ENCODE measurements at regions of chr7 and their contacts with region 1.

Region 1: GRCh38 chr7:107890962-107891635 is at the start of gene DLD:
- DNase-seq: peak; percentile 95 to 98 (median 96)
- H3K4me3 ChIP-seq: peak within 1 kb of the TSS; percentile 12 to 87 (median 69)
- H3K27ac ChIP-seq: peak within 1 kb of the TSS; percentile 36 to 100 (median 99)
- H3K4me1 ChIP-seq: peaks cover 7 to 42% of the 10 kb centered on the region in 2 donors
- H3K27me3 ChIP-seq: no peaks in the 10 kb centered on the region
- CTCF ChIP-seq: no peak
- POLR2A ChIP-seq: peak; percentile 85 to 87
- total RNA-seq, gene DLD: 72.4 to 616 (median 153) TPM

Region 2: DNA sequence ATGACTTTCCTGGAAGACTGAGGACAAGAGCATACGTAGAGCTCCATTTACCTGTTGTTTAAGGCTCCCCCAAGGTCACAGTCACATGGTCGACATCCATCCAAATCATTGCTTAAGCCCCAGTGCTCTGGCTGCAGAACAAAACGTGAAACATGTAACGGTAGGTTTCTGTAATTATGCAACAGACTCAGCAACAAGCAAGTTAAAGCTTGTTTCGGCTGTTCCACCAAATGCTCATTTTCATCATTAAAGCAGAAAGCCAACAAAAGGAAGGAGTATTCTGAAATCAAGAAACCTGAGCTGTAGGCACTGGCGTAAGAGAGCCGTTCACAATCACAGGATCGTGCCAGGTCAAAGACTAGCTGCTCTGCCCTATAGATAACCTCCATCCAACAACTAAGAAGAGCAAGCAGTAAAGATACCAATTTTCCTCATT is 81.9 kb after region 1 on chr7:
- intact Hi-C with region 1: no loop called
- DNase-seq: no peak
- H3K4me3 ChIP-seq: no peak overlapping the region
- H3K27ac ChIP-seq: peak overlapping the region in 4 of 5 donors; percentile 9 to 76 (median 42)
- H3K4me1 ChIP-seq: peaks cover 0 to 9% of the 10 kb centered on the region in 2 donors
- H3K27me3 ChIP-seq: no peaks in the 10 kb centered on the region
- CTCF ChIP-seq: no peak
- POLR2A ChIP-seq: no peak

Region 3: DNA sequence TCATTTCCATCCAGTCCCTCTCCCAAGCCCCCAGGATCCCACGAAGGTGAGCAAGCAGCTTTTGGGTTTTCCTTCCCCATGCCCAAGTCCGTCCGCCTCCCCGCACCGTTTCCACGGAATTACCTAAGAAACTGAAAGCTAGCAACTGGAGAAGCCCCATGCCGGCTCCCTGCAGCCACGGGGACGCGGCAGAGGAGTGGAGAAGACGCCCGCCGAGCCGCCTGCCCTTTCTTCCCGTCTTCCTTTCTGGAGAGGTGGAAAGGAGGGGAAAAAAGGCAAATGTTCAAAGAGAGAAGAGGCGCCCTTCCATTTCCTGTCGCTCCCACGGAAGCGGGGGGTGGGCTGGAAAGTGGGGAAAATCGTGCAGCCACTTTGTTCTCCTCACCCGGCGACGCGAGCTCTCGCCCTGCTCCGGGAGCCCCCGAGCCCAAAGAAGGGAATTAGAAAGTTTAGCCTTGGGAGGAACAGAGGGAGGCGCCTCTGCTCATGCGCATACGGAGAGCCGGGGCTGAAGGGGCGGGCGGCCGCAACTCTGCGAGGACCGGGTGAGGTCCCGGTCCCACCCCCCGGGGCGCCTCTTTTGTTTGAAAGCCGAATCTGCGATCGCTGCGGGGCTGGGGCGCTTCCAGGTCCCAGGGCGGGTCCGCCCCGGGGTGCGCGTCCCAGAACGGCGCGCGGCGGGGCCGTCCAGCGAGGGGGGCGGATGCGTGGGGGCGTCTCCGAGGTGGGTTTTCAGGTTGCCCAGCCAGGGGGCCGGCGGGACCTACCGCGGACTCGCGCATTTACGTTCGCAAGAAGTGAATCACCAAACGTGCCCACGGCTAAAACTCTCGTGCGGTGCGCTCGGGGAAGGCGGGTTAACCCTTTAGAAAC is 111.9 kb after region 1 on chr7 and contains the start of gene LAMB1:
- intact Hi-C with region 1: loop called in 1 of 2 experiments (anchors 10 kb)
- DNase-seq: peak; percentile 54 to 69 (median 62)
- H3K4me3 ChIP-seq: peak within 1 kb of the TSS; percentile 34 to 84 (median 56)
- H3K27ac ChIP-seq: peak within 1 kb of the TSS in 3 of 5 donors; percentile 45 to 86 (median 72)
- H3K4me1 ChIP-seq: peaks cover 0 to 27% of the 10 kb centered on the region in 2 donors
- H3K27me3 ChIP-seq: peaks cover 8% of the 10 kb centered on the region
- CTCF ChIP-seq: no peak
- POLR2A ChIP-seq: peak in 1 of 2 donors; percentile 51
- total RNA-seq, gene LAMB1: 48.6 to 159 (median 88.9) TPM

Measured in adrenal gland (tissue), 19 donors.